ENCODE measurements at regions of chr13 and their contacts with region 1.

Region 1: DNA sequence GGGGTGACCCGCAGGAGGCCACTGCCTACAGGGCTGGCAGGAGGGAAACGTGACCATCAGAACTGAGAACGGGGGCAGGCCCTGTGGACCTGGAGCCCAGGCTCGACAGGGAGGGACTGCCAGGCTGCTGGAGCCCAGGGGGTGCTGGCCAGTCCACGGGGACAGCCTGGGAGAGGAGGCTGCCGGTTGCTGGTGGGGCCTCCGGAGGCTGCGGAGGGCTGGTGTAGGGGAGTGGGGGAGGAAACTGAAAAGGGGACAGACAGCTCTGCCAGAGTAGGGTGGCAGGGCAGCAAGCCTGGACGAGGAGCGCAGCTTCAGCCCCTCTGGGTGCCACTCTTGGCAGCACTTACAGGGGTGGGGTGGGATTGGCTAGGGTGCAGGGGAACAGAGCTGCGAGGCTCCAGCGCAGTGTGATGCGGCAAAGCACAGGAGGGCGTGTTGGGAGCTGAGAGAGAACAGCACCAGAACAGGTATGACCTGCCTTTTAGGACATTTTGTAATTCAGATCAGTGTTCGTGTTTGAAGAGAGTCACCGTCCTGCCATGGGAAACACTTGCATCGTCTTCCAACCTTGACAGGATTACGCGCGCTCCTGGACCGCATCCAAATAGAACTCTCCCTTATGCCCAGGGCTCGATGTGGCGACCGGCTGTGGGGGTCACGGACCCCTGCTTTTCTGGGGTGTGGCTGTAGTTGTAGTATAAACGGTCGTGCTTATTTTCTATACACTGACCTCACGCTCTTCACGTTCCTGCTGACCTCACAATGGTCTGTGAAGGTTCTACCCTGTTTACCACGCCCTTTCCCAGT is 19.9 kb upstream of the ARHGEF7 start:
- DNase-seq: peak in 1 of 6 donors; percentile 48
- ATAC-seq: no peak
- H3K4me3 ChIP-seq: no peak overlapping the region
- H3K27ac ChIP-seq: no peak overlapping the region
- H3K4me1 ChIP-seq: no peaks in the 10 kb centered on the region
- H3K27me3 ChIP-seq: no peaks in the 10 kb centered on the region
- CTCF ChIP-seq: no peak

Region 2: GRCh38 chr13:111216166-111216960 is 121.1 kb after region 1 on chr13:
- intact Hi-C with region 1: loop called in 1 of 3 experiments (anchors 10 kb)
- DNase-seq: peak in 2 of 6 donors; percentile 20 to 36
- ATAC-seq: peak; percentile 49 to 79 (median 70)
- H3K4me3 ChIP-seq: no peak overlapping the region
- H3K27ac ChIP-seq: no peak overlapping the region
- H3K4me1 ChIP-seq: no peaks in the 10 kb centered on the region
- H3K27me3 ChIP-seq: no peaks in the 10 kb centered on the region
- CTCF ChIP-seq: peak in 2 of 4 donors; percentile 11 to 16

Region 3: GRCh38 chr13:111247562-111247961 is 152.3 kb after region 1 on chr13:
- intact Hi-C with region 1: no loop called
- DNase-seq: peak in 4 of 6 donors; percentile 42 to 67 (median 48)
- ATAC-seq: peak; percentile 89 to 94 (median 90)
- H3K4me3 ChIP-seq: no peak overlapping the region
- H3K27ac ChIP-seq: peak overlapping the region in 1 of 4 donors; percentile 17
- H3K4me1 ChIP-seq: peaks cover 16 to 22% (median 18%) of the 10 kb centered on the region in 3 donors
- H3K27me3 ChIP-seq: no peaks in the 10 kb centered on the region
- CTCF ChIP-seq: no peak

Measured in pancreas (tissue), 10 donors.